ENCODE measurements at regions of chr22 and their contacts with region 1.

Region 1: GRCh38 chr22:37260901-37261336 is 16.9 kb upstream of the RAC2 start:
- DNase-seq: peak; percentile 68
- H3K4me3 Mint-ChIP-seq: no peak overlapping the region
- H3K27ac Mint-ChIP-seq: no peak overlapping the region
- H3K4me1 Mint-ChIP-seq: peaks cover 25% of the 10 kb centered on the region
- H3K27me3 Mint-ChIP-seq: peaks cover 10% of the 10 kb centered on the region

Region 2: DNA sequence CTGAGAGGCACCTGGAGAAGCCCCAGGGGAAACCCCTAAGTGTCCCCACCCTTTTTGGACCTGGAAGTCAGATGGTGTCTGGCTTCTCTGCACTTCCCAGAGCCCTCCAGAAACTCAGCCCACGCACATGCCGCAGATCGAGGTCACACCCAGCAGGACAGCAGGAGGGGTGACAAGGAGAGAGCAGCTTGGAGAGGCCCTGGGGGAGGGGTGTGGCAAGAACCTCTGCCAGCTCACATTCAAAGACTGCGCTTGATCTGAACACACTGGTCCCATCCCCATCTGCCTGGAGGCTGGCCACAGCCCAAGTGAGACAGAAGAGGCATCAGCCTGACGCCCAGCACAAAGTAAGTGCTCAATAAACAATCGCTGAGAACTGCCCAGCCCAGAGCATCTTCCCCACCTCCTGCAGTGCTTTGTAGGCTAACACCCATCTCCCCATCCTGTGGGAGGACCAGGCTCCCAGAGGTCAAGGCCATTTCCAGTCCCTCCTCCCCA is 172.8 kb before region 1 on chr22:
- CTCF ChIA-PET with region 1: no interaction called
- POLR2A ChIA-PET with region 1: no interaction called
- DNase-seq: peak; percentile 38
- H3K4me3 Mint-ChIP-seq: peak overlapping the region; percentile 54
- H3K27ac Mint-ChIP-seq: peak overlapping the region; percentile 40
- H3K4me1 Mint-ChIP-seq: peaks cover 50% of the 10 kb centered on the region
- H3K27me3 Mint-ChIP-seq: no peaks in the 10 kb centered on the region

Region 3: DNA sequence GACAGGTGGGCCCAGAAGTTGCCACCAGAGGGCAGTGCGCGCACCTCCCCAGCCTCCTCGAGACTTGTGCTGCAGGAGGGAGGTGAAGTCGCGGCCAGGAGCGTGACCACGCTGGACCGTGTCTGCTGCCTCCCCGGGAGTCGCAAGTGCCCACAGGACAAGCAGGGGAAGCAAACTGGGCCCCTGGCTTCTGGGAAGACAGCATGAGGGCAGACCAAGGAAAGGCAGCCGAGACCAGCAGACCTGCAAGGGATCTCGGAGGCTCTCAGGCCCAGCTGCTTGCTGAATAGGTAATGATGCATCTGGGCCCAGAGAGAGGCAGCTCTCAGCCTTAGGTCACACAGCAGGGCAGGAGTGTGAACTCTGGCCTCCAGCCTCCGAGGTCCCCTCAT is 94.2 kb before region 1 on chr22:
- CTCF ChIA-PET with region 1: interaction called, 14 read pairs
- POLR2A ChIA-PET with region 1: interaction called, 5 read pairs
- DNase-seq: peak; percentile 87
- H3K4me3 Mint-ChIP-seq: peak overlapping the region; percentile 71
- H3K27ac Mint-ChIP-seq: peak overlapping the region; percentile 94
- H3K4me1 Mint-ChIP-seq: peaks cover 85% of the 10 kb centered on the region
- H3K27me3 Mint-ChIP-seq: no peaks in the 10 kb centered on the region

Region 4: DNA sequence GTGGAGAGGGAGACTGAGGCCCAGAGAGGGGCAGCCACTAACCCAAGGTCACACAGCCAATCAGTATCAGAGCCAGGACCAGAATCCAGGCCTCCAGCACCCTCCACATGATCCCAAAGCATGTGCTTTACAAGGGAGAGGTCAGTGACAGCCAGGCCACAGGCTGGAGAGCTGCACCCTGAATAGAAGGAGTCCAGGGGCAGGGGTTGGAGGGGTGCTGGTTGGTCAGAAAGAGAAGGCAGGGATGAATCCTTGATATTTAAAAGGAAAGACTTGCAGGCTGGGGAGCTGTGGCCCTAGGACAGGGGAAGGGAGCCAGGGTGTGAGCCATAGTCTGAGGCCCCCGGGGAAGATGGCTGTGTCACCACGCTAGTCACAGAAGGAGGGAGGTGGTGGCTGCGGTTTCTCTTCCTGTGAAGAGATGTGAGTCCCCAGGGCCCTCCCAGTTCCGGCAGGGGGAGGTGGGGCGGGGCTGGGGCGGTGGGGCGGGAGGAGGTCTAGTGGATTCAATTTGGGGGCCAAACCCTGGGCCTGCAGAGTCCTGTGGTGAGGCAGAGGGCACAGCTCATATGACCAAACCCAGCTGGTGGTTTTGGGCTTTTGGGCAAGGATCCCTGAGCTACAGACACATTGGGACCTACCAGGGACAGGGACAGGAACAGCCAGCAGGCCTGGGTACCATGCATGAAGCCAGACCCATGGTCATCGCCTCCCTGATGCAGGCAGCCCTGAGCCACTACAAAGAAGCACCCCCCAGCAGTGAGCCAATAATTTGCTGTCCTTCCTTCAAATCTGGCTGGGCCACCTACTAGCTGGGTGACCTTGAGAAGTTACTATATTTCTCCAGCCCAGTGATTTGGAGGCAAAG is 30.9 kb before region 1 on chr22:
- CTCF ChIA-PET with region 1: interaction called, 16 read pairs
- POLR2A ChIA-PET with region 1: interaction called, 4 read pairs
- DNase-seq: peak; percentile 94
- H3K4me3 Mint-ChIP-seq: peak overlapping the region; percentile 45
- H3K27ac Mint-ChIP-seq: peak overlapping the region; percentile 97
- H3K4me1 Mint-ChIP-seq: peaks cover 90% of the 10 kb centered on the region
- H3K27me3 Mint-ChIP-seq: no peaks in the 10 kb centered on the region

Region 5: DNA sequence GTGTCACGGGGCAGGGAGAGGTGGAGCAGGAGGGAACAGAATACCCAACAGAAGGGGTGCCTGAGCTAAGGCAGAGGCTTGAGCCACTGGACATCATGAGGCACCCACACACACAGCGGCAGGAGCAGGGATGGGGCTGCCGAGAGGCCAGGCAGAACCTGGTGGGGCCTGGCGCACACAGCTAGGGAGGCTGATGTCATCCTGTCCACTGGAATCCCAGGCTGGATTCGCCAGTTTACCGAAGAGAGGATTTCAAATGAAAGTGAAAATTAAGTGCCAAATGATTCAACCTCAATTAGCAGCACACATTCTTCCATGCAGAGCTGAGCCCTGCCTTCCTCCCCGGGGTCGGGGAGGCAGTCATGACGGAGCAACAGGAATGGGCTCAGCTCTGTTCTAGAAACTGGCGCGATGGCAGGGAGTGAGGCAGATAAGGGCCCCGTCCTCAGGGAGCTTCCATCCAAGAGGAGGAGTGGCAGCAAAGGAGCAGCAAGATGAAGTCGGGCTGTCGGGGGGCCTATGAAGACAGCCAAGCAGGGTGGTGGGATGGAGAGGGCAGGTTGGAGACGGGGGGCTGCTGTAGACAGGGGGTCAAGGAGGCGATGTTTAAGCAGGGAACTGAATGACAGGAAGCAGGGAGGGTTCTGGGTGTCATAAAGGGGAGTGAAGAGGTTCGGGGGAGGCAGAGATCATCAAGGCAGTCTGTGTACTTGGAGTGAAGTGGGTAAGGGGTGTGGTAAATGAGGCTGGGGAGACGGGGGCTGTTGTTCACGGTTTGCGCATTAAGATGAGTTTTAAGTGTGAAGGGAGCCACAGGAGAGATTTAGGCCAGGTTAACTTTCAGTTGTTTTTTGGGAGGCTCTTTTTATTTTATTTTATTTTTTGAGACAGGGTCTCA is 23.3 kb before region 1 on chr22:
- CTCF ChIA-PET with region 1: interaction called, 136 read pairs
- POLR2A ChIA-PET with region 1: interaction called, 72 read pairs
- DNase-seq: no peak
- H3K4me3 Mint-ChIP-seq: peak overlapping the region; percentile 100
- H3K27ac Mint-ChIP-seq: peak overlapping the region; percentile 97
- H3K4me1 Mint-ChIP-seq: peaks cover 91% of the 10 kb centered on the region
- H3K27me3 Mint-ChIP-seq: no peaks in the 10 kb centered on the region

Region 6: GRCh38 chr22:37273126-37273845 is 12.4 kb after region 1 on chr22:
- CTCF ChIA-PET with region 1: interaction called, 31 read pairs
- POLR2A ChIA-PET with region 1: no interaction called
- DNase-seq: peak; percentile 49
- H3K4me3 Mint-ChIP-seq: no peak overlapping the region
- H3K27ac Mint-ChIP-seq: peak overlapping the region; percentile 28
- H3K4me1 Mint-ChIP-seq: peaks cover 63% of the 10 kb centered on the region
- H3K27me3 Mint-ChIP-seq: peaks cover 8% of the 10 kb centered on the region

Region 7: GRCh38 chr22:37282385-37282677 is 21.4 kb after region 1 on chr22 and contains the start of gene CYTH4:
- CTCF ChIA-PET with region 1: interaction called, 15 read pairs
- POLR2A ChIA-PET with region 1: interaction called, 3 read pairs
- DNase-seq: peak; percentile 84
- H3K4me3 Mint-ChIP-seq: peak within 1 kb of the TSS; percentile 94
- H3K27ac Mint-ChIP-seq: peak within 1 kb of the TSS; percentile 95
- H3K4me1 Mint-ChIP-seq: peaks cover 59% of the 10 kb centered on the region
- H3K27me3 Mint-ChIP-seq: peaks cover 1% of the 10 kb centered on the region
- total RNA-seq, gene CYTH4: 114 to 126 TPM

Region 8: DNA sequence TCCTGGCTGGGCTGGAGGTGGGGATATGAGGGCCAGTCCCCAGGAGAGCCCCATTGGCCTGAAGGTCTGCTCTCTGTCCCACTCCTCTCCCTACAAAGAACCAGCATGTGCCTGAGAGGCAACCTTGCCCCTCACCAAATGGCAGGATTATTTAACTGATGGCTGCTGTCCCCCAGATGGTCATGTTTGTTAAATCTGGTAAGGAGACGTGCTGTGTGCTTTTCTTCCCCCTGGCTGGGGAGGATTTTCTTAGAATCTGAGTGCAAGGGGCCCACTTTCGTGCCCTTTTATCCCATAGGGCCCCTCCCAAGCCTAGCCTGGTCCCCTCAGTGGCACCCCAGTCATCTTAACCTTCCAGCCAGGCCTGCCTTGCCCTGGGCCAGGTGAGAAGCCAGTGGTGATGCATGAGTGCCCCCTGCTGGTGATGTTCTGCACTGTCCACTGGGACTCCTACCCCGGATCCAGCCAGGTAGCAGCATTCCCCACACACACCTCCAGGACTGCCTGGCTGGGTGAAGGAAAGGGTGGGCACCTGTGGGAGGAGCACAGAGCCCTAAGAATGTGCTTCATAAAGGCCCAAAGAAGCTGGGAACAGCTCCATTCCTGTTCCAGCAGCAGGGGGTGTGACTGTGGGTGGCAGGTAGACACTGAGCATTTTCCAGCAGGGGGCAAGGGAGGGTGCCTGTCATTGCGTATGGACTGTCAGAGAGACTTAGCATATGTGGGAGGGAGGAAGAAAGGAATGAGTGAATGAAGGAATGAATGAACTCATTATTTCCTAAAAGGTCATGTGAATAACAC is 196.4 kb after region 1 on chr22:
- CTCF ChIA-PET with region 1: interaction called, 24 read pairs
- POLR2A ChIA-PET with region 1: no interaction called
- DNase-seq: peak; percentile 87
- H3K4me3 Mint-ChIP-seq: no peak overlapping the region
- H3K27ac Mint-ChIP-seq: no peak overlapping the region
- H3K4me1 Mint-ChIP-seq: peaks cover 4% of the 10 kb centered on the region
- H3K27me3 Mint-ChIP-seq: no peaks in the 10 kb centered on the region

Measured in activated CD4-positive, alpha-beta memory T cell treated with anti-CD3 and anti-CD28 coated beads, Interleukin-2, amount 10 ng/mL, durations not matched to agents 7 days and 5 days (primary cell).